H1 (cell line): ENCODE measurements at regions of chr3 and their contacts with region 1.

Region 1: GRCh38 chr3:39288300-39288808 is 8.5 kb upstream of the CX3CR1 start:
- DNase-seq: peak; percentile 90 to 91
- H3K4me3 ChIP-seq: no peak overlapping the region
- H3K27ac ChIP-seq: no peak overlapping the region
- H3K4me1 ChIP-seq: no peaks in the 10 kb centered on the region
- H3K27me3 ChIP-seq: no peaks in the 10 kb centered on the region
- CTCF ChIP-seq: peak; percentile 93 to 99 (median 99)
- EP300 ChIP-seq: no peak
- POLR2A ChIP-seq: no peak
- RAD21 ChIP-seq: peak; percentile 100

Region 2: DNA sequence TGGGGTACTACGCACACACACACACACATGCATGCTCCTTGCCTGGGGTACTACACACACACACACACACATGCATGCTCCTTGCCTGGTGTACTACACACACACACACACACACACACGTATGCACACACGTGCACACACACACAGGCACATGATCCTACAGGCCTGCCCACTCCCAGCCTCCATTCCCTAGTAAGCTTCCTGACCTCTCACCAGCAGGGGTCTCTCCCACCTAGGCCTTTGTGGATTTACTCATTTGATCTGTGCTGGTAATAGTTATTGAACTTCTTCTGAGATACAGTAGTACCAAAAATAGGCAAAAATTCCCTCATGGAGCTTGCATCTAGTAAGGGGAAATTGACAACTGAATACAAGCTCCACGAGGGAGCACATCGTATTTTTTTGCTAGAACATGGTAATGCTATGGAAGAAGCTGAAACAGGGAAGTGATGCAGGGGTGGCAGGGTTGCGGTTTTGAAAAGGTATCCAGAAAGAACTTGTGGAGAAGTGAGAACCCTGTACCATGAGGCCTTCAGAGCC is 161.8 kb before region 1 on chr3:
- CTCF ChIA-PET with region 1: interaction called, 496 read pairs
- POLR2A ChIA-PET with region 1: interaction called, 9 read pairs
- DNase-seq: no peak
- H3K4me3 ChIP-seq: no peak overlapping the region
- H3K27ac ChIP-seq: no peak overlapping the region
- H3K4me1 ChIP-seq: 0 out of 7 replicates have a peak, but pooled peaks cover 0 to 3% (median 0%) of the 10 kb centered on the region in 4 experiments
- H3K27me3 ChIP-seq: no peaks in the 10 kb centered on the region
- CTCF ChIP-seq: peak; percentile 69 to 72 (median 70)
- EP300 ChIP-seq: no peak
- POLR2A ChIP-seq: no peak
- RAD21 ChIP-seq: peak; percentile 84 to 87

Region 3: GRCh38 chr3:39166134-39166731 is 122.1 kb before region 1 on chr3:
- CTCF ChIA-PET with region 1: interaction called, 11 read pairs
- POLR2A ChIA-PET with region 1: no interaction called
- DNase-seq: no peak
- H3K4me3 ChIP-seq: no peak overlapping the region
- H3K27ac ChIP-seq: no peak overlapping the region
- H3K4me1 ChIP-seq: peaks cover 0 to 11% (median 4%) of the 10 kb centered on the region in 4 experiments; a peak in 4 of 7 replicates
- H3K27me3 ChIP-seq: no peaks in the 10 kb centered on the region
- CTCF ChIP-seq: no peak
- EP300 ChIP-seq: no peak
- POLR2A ChIP-seq: no peak
- RAD21 ChIP-seq: peak in 1 of 2 experiments; percentile 17; a peak in 1 of 4 replicates

Region 4: DNA sequence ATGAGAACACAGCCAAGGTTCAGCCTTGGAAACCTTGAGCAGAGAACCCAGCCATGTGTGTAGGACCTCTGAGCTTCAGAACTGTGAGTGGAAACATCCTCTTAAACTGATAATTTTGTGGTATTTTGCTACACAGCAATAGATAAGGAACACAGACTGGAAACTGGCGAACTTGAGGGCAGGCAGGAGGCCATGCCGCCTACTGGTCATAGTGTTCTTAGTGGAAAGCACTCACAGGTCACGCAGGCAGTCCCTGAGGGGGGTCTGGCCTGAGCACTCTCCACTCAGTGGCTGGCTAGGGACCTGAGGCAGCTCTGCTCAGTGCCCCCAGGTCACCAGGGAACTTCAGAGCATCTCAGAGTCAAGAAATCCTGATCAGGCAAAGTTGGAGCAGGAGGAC is 86.3 kb before region 1 on chr3:
- CTCF ChIA-PET with region 1: interaction called, 767 read pairs
- POLR2A ChIA-PET with region 1: no interaction called
- DNase-seq: no peak
- H3K4me3 ChIP-seq: no peak overlapping the region
- H3K27ac ChIP-seq: no peak overlapping the region
- H3K4me1 ChIP-seq: no peaks in the 10 kb centered on the region
- H3K27me3 ChIP-seq: no peaks in the 10 kb centered on the region
- CTCF ChIP-seq: no peak
- EP300 ChIP-seq: no peak
- POLR2A ChIP-seq: no peak
- RAD21 ChIP-seq: no peak

Region 5: GRCh38 chr3:39249453-39250115 is 38.8 kb before region 1 on chr3:
- CTCF ChIA-PET with region 1: interaction called, 21 read pairs
- POLR2A ChIA-PET with region 1: no interaction called
- DNase-seq: no peak
- H3K4me3 ChIP-seq: no peak overlapping the region
- H3K27ac ChIP-seq: no peak overlapping the region
- H3K4me1 ChIP-seq: peaks cover 0 to 3% (median 0%) of the 10 kb centered on the region in 4 experiments; a peak in 1 of 7 replicates
- H3K27me3 ChIP-seq: no peaks in the 10 kb centered on the region; a peak in 2 of 7 replicates
- CTCF ChIP-seq: no peak
- EP300 ChIP-seq: no peak
- POLR2A ChIP-seq: no peak
- RAD21 ChIP-seq: no peak

Region 6: DNA sequence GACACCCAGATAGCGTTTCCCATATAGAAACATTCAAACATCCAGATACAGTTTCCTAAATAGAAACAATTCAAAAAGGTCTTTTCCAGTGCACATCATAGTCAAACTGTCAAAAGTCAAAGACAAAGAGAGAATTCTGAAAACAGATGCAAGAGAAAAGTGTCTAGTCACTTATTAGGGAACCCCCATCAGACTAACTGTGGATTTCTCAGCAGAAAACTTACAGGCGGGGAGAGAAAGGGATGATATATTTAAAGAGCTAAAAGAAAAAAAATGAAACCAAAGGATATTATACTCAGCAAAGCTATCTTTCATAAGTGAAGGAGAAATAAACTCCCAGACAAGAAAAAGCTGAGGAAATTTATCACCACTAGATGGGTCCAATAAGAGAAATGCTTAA is 13.8 kb after region 1 on chr3:
- CTCF ChIA-PET with region 1: interaction called, 55 read pairs
- POLR2A ChIA-PET with region 1: interaction called, 3 read pairs
- DNase-seq: no peak
- H3K4me3 ChIP-seq: no peak overlapping the region
- H3K27ac ChIP-seq: no peak overlapping the region
- H3K4me1 ChIP-seq: no peaks in the 10 kb centered on the region
- H3K27me3 ChIP-seq: no peaks in the 10 kb centered on the region
- CTCF ChIP-seq: no peak
- EP300 ChIP-seq: no peak
- POLR2A ChIP-seq: no peak
- RAD21 ChIP-seq: no peak

Region 7: DNA sequence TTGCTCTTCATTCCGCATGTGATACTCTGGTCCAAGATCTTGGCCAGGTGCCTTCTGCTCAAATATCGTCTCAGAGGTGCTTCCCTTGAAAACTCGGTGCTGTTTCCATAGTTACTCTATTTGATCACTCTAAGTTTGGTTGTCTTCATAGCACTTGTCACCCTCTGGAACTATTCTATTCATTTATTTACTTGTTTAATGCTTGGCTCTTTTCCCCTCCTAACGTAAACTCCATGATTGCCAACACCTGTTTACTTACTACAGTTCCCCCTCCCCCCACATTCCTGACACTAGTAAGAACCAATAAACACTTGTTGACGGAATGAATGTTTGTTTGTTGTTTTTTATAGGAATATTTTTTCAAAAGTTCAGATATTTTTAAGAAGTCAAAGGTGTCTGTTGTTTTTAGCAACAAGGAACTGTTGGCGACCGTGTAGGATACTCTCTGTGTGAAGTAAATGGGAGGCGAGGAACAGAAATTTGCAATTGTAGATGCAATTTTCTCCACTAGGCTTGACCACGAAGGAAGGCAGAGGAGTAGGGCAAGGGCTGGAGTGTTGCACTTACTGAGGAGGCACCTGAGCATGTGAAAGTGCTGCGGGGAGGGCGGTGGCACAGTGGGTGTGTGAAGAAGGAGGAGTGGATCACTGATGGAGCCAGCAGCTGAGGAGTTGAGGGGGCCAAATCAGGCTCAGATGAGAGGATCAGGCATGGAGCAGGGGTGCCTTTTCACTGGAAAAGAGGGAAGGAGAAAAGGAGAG is 227.5 kb after region 1 on chr3:
- CTCF ChIA-PET with region 1: no interaction called
- POLR2A ChIA-PET with region 1: no interaction called
- DNase-seq: no peak
- H3K4me3 ChIP-seq: no peak overlapping the region
- H3K27ac ChIP-seq: no peak overlapping the region
- H3K4me1 ChIP-seq: peaks cover 0 to 3% (median 1%) of the 10 kb centered on the region in 4 experiments; a peak in 3 of 7 replicates
- H3K27me3 ChIP-seq: no peaks in the 10 kb centered on the region
- CTCF ChIP-seq: peak in 1 of 3 experiments; percentile 11; a peak in 1 of 4 replicates
- EP300 ChIP-seq: no peak
- POLR2A ChIP-seq: no peak
- RAD21 ChIP-seq: no peak

Region 8: GRCh38 chr3:39631136-39631535 is 342.8 kb after region 1 on chr3:
- CTCF ChIA-PET with region 1: no interaction called
- POLR2A ChIA-PET with region 1: no interaction called
- DNase-seq: no peak
- H3K4me3 ChIP-seq: no peak overlapping the region
- H3K27ac ChIP-seq: no peak overlapping the region
- H3K4me1 ChIP-seq: no peaks in the 10 kb centered on the region; a peak in 2 of 7 replicates
- H3K27me3 ChIP-seq: no peaks in the 10 kb centered on the region
- CTCF ChIP-seq: no peak
- EP300 ChIP-seq: no peak
- POLR2A ChIP-seq: no peak
- RAD21 ChIP-seq: no peak